ENCODE measurements at regions of chr17 and their contacts with region 1.

Region 1: DNA sequence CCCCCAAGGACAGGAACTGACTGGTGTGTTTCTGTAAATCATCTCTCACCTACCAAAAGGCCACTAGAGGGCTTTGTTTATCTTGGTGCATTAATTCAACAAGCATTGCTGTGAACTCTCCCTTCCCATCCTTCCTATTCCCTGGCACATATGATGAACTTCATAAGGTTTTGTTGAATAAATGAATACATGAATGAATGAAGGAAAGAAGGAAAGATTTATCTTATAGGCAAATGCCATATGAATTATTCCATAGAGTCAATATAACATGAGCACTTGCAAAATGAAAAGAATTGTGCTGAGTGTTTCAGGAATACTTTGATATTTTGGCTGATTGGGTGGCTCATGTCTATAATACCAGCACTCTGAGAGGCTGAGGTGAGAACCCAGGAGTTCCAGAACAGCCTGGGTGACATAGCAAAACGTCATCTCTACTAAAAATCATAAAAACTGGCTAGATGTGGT is 4.3 kb downstream of the SPDYE4 start:
- DNase-seq: no peak
- H3K4me3 Mint-ChIP-seq: no peak overlapping the region
- H3K27ac Mint-ChIP-seq: no peak overlapping the region
- H3K4me1 Mint-ChIP-seq: no peaks in the 10 kb centered on the region
- H3K27me3 Mint-ChIP-seq: peaks cover 4% of the 10 kb centered on the region

Region 2: DNA sequence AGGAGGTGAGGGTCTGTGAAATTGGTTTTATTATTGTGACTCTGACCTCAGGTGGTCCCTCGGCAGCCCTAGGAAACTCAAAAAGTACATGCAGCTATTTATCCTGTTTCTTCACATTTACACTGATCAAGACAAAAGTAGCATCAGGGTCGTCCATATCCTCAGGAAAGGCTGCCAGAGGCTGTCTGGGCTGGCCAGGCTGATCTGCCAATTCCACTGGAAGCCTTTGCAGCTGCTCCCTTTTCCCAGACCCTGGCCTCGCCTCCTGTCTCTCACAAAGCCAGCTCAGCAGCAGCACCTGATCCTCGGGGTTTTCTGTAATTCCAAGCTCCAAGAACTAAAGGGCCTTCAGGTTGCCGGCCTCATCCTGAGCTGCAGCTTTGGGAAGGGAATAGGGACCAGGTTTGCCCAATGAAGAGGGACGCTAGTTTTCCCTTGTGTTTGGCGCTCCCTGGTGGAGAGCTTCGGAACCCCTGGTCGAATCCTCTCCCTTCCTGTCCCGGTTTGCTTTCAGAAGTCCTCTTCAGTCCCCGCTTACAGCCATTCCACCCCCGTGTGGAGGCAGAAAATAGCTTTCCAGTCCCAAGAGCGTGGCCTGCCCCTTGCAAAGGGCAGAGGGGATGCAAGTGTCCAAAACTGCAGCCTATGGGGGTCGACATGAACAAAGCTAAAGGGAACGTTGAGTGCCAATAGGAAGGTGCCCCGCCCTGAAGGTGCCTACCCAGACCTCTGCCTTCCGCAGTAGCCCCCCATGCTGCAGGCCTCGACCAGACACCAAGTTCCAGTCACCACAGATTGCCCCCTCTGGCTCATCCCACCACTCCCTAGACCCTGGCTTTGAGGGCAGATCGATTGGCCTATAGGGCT is 31.8 kb after region 1 on chr17:
- CTCF ChIA-PET with region 1: interaction called, 6 read pairs
- intact Hi-C with region 1: loop called (anchors 5 kb)
- DNase-seq: peak; percentile 83
- H3K4me3 Mint-ChIP-seq: no peak overlapping the region
- H3K27ac Mint-ChIP-seq: no peak overlapping the region
- H3K4me1 Mint-ChIP-seq: peaks cover 2% of the 10 kb centered on the region
- H3K27me3 Mint-ChIP-seq: no peaks in the 10 kb centered on the region

Measured in activated naive CD4-positive, alpha-beta T cell treated with anti-CD3 and anti-CD28 coated beads for 36 hours (primary cell).